Activated CD4-positive, alpha-beta memory T cell treated with anti-CD3 and anti-CD28 coated beads for 36 hours (primary cell): ENCODE measurements at regions of chr11 and their contacts with region 1.

Region 1: DNA sequence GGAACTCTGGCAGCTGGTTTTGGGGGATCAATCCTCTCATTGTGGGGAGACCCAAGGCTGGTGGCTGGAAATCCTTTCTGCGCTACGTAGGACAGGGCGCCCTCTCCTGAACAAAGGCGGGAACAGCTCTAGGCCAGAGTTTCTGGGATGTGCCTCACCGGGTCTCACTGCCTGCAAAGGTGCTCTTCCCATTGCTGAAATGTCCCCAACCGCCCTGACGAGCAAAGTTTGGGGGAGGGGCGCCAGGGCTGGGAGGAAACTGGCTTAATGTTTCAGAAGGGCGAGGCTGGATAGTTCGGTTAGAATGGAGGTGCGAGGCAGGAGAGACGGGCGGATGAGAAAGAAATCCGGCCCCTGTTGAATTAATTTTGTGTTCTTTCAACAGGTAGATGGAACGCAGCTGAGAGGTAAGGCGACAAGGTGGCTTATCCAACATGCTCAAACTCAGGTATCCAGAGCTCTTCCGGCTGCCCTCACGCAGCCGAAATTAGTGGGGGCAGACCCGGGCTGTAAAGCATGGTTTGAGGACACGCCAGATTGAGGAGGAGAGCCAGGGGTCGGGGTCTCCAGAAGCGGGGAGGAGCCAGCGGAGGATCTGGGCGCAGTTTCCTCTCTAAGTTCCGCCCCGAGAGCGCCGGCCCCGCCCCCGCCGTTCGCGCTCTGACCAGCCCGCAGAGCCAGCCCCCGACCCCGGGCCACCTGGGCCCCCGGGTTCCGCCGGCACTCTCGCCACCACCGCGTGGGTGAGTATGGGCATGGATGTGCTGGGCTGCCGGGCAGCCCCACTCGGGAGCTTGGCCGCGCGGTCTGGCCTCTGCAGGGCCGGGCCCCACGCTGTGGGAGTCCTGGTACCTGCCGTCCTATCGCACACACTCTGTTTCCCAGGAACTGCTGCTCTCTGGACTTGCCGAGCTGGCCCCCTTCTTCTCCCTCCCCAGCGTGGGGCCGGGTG is at the start of gene PGAP2:
- DNase-seq: peak; percentile 77
- H3K4me3 Mint-ChIP-seq: peak within 1 kb of the TSS; percentile 84
- H3K27ac Mint-ChIP-seq: peak within 1 kb of the TSS; percentile 80
- H3K4me1 Mint-ChIP-seq: peaks cover 19% of the 10 kb centered on the region
- H3K27me3 Mint-ChIP-seq: no peaks in the 10 kb centered on the region
- total RNA-seq, gene PGAP2: 27.4 to 30.2 TPM

Region 2: DNA sequence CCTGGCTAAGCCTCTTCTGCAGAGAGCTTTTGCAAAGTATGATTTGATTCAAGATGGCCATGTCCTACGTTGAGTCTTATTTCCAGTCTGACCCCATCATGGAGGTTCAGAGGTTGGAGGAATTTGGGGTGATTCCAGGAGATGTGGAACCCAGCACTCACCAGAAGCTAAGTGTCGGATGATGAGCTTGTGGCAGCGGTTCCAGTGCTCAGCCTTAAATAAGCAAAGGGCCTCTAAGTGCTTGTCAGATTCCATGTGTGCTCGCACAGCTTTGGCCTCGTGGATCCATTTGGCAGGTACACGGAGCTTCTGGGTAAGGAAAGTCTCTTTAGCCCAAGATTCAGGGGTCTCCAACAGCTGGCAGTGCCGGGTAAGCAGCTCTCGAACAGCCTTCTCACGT is 125.1 kb before region 1 on chr11:
- CTCF ChIA-PET with region 1: interaction called, 6 read pairs
- POLR2A ChIA-PET with region 1: no interaction called
- intact Hi-C with region 1: loop called (anchors 5 kb)
- DNase-seq: no peak
- H3K4me3 Mint-ChIP-seq: no peak overlapping the region
- H3K27ac Mint-ChIP-seq: no peak overlapping the region
- H3K4me1 Mint-ChIP-seq: peaks cover 7% of the 10 kb centered on the region
- H3K27me3 Mint-ChIP-seq: no peaks in the 10 kb centered on the region

Region 3: DNA sequence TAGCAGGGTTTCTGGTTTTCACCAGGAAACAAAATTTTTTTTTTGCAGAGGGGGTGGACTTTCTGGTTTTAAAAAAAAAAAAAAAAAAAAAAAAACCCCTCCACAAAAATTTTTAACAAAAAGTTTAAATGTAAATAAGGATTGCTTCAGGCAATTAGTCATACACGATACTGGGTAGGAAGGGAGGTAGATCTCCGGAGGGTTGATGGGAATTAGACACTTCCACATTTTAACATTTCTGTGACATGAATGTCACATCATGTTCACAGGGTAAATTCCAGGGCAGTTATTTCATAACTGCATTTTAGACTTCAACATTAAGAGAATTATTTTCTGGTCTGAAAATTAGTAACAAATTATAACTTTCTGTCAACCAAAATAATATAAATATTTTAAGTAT is 26.8 kb before region 1 on chr11:
- CTCF ChIA-PET with region 1: interaction called, 36 read pairs
- POLR2A ChIA-PET with region 1: interaction called, 3 read pairs
- intact Hi-C with region 1: loop called (anchors 1 kb)
- DNase-seq: no peak
- H3K4me3 Mint-ChIP-seq: no peak overlapping the region
- H3K27ac Mint-ChIP-seq: peak overlapping the region; percentile 33
- H3K4me1 Mint-ChIP-seq: peaks cover 54% of the 10 kb centered on the region
- H3K27me3 Mint-ChIP-seq: no peaks in the 10 kb centered on the region

Region 4: GRCh38 chr11:3797329-3798095 is 10.7 kb before region 1 on chr11 and contains the start of gene NUP98:
- CTCF ChIA-PET with region 1: interaction called, 40 read pairs
- POLR2A ChIA-PET with region 1: interaction called, 15 read pairs
- intact Hi-C with region 1: loop called (anchors 1 kb)
- DNase-seq: peak; percentile 100
- H3K4me3 Mint-ChIP-seq: peak within 1 kb of the TSS; percentile 90
- H3K27ac Mint-ChIP-seq: peak within 1 kb of the TSS; percentile 96
- H3K4me1 Mint-ChIP-seq: peaks cover 40% of the 10 kb centered on the region
- H3K27me3 Mint-ChIP-seq: no peaks in the 10 kb centered on the region
- total RNA-seq, gene NUP98: 90.6 to 104 TPM

Region 5: GRCh38 chr11:3841426-3842350 is 33.5 kb after region 1 on chr11:
- CTCF ChIA-PET with region 1: interaction called, 24 read pairs
- POLR2A ChIA-PET with region 1: interaction called, 3 read pairs
- intact Hi-C with region 1: no loop called
- DNase-seq: peak; percentile 97
- H3K4me3 Mint-ChIP-seq: peak overlapping the region; percentile 76
- H3K27ac Mint-ChIP-seq: peak overlapping the region; percentile 93
- H3K4me1 Mint-ChIP-seq: peaks cover 42% of the 10 kb centered on the region
- H3K27me3 Mint-ChIP-seq: no peaks in the 10 kb centered on the region

Region 6: DNA sequence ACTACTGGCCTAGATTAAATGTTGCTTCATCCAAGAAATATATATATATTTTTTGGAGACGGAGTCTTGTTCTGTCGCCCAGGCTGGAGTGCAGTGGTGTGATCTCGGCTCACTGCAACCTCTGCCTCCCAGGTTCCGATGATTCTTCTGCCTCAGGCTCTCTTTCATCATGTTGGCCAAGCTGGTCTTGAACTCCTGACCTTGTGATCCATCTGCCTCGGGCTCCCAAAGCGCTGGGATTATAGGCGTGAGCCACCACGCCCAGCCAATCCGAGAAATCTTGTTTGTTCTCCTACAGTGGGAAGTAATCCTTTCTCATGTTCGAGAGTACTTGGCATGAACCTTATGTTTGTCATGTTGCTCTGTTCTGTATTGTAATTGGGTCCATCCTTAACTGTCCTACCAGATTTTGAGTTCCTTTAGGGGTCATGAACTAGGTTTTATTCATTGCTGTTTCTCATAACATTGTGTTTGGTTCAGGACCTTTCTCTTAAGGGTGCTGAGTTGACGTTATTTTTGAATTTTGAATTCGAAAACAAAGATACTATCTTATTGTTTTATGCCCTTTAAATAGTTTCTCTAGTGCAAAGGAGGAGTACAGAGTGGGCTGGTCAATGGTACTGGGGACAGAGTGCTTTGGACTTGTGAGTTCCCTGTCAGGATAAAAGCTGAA is 172.9 kb after region 1 on chr11:
- CTCF ChIA-PET with region 1: no interaction called
- POLR2A ChIA-PET with region 1: no interaction called
- intact Hi-C with region 1: no loop called
- DNase-seq: no peak
- H3K4me3 Mint-ChIP-seq: no peak overlapping the region
- H3K27ac Mint-ChIP-seq: peak overlapping the region; percentile 0
- H3K4me1 Mint-ChIP-seq: peaks cover 70% of the 10 kb centered on the region
- H3K27me3 Mint-ChIP-seq: no peaks in the 10 kb centered on the region